ENCODE measurements at regions of chr9 and their contacts with region 1.

Region 1: DNA sequence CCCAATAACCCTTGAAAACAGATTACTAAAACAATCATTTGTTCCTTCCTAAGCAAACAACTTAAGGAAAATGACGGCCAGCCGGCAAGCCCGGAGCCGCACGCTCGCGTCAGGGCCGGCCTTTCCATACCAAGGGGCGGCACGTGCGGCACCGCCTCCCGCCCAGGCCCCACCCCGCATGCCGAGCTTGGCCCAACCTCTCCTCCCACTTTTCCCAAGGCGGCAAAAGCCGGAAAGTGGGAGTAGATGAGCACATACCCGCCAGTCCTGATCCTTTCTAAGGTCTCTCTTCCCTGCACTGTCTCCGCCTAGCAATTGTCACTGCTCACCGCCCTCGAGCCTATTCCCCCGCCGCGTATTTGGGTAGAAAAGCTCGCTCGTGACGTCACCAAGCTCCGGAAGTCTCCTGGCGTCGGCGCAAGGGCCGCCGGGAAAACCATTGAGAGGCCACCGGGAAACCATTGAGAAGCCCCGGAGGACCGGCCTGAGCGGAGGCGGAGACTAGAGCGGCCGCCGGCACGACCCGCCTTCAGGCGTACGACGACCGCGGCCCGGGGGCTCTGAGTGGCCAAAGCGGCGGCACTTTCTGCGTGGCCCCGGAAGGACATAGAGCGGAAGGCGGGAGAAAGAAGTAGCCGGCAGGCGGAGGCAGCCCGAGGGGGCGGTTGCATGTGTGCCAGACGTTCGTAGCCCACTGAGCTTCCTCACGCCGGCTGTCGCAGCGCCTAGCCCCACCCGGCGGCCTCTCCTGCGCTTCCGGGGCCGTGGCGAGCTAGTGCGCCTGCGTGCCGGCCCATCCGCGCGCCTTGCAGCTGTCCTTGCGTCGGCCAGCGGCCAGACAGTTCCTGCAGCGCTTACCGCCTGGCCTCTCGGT is at the starts of genes NCBP1 and TSTD2:
- DNase-seq: peak; percentile 89 to 98 (median 96)
- ATAC-seq: peak; percentile 87 to 90
- H3K4me3 Mint-ChIP-seq: peak within 1 kb of the TSS; percentile 90 to 100 (median 98)
- H3K27ac Mint-ChIP-seq: peak within 1 kb of the TSS; percentile 95 to 100 (median 99)
- H3K4me1 Mint-ChIP-seq: peaks cover 40 to 77% (median 61%) of the 10 kb centered on the region in 4 donors
- H3K27me3 Mint-ChIP-seq: no peaks in the 10 kb centered on the region
- polyA plus RNA-seq, gene NCBP1: 17.9 to 19.7 (median 18.1) TPM
- polyA plus RNA-seq, gene TSTD2: 7.0 to 8.9 (median 7.3) TPM

Region 2: GRCh38 chr9:97411789-97412625 is 221.2 kb before region 1 on chr9 and contains the start of gene TDRD7:
- POLR2A ChIA-PET with region 1: interaction called, 18 read pairs
- DNase-seq: peak; percentile 83 to 96 (median 90)
- ATAC-seq: peak; percentile 83 to 88
- H3K4me3 Mint-ChIP-seq: peak within 1 kb of the TSS; percentile 68 to 95 (median 88)
- H3K27ac Mint-ChIP-seq: peak within 1 kb of the TSS; percentile 76 to 95 (median 86)
- H3K4me1 Mint-ChIP-seq: peaks cover 15 to 44% (median 37%) of the 10 kb centered on the region in 4 donors
- H3K27me3 Mint-ChIP-seq: peaks cover 10 to 23% (median 14%) of the 10 kb centered on the region in 5 donors
- polyA plus RNA-seq, gene TDRD7: 2.5 to 5.0 (median 3.0) TPM

Region 3: DNA sequence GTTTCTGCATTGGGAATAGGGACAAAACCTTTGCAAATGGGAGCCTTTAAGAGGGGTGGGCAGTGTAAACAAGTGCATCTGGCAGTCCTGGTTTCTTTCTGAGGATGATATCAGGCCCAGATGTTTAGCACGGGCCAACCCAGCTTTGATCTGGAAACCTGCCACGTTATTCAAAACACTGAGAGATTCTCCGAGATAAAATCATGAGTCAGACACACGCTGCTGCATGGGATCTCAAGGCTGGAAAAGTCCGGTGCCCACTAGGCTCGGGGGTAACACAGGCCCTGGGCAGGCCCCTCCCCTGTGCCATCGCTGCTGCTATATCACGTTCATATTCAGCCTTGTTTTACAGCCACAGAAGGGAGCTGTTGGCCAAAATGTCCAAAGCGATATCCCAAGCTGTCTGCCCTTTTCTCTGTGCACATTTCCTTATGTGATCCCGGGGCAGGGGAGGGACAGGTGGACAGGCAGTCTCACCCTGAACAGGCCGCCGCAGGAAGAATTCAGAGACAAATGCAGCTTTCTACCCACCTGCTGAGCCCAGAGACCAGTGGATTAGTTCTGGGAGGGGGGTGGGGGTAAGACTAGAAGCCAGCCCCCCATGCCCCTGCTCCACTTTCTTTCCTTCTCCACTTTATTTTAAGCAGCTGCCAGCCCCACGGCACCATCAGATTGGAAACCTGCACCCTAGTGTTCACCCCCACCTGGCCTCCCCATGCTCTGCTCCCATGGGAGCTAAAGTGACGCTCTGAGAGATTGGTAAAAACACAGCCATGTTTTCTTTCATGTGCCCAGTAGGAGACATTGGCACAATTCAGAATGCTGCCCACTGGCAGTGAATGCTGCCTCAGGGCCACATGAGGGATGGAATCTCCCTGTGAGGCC is 68.7 kb before region 1 on chr9:
- POLR2A ChIA-PET with region 1: no interaction called
- DNase-seq: no peak
- ATAC-seq: no peak
- H3K4me3 Mint-ChIP-seq: no peak overlapping the region
- H3K27ac Mint-ChIP-seq: peak overlapping the region in 1 of 10 donors; percentile 37
- H3K4me1 Mint-ChIP-seq: peaks cover 0 to 2% (median 0%) of the 10 kb centered on the region in 4 donors
- H3K27me3 Mint-ChIP-seq: peaks cover 1 to 11% (median 7%) of the 10 kb centered on the region in 5 donors

Region 4: DNA sequence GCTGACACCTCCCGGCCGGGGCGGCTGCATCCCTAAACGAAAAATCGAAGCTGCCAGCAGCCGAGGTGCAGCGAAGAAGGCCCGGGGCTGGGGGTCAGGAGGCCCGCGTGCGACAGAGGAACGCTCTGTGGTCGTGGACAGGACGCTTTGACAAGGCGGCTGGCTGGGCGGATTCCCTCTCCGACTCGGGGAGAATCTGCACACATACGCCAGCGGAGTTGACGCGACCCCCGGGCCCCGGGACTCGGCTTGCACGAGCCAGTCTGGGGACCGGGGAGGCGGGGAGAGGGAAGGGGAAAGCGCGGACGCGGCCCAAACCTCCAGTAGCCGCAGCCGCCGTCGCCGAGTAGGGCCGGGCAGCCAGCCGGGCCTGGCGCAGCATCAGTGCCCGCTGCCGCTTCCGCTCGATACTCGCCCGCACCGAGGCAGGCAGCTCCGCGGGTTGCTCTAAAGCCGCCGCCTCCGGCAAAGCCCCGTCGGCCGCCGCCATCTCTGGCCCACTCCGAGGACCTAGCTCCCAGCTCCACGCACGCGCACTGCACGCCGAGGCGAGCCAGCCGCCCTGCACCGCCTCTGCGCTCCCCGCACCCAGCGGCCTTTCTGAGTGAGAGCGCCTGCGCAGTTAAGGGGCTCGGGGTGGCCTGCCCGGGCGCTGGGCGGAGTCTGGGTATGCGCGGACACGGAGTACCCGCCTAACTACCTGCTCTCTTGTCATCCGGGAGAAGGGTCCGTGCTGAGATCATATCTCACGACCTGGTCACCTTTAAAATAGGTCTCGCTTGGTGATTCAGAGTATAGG is 63.8 kb after region 1 on chr9 and contains the start of gene XPA:
- POLR2A ChIA-PET with region 1: interaction called, 30 read pairs
- DNase-seq: peak; percentile 94 to 98 (median 96)
- ATAC-seq: peak; percentile 92 to 93
- H3K4me3 Mint-ChIP-seq: peak within 1 kb of the TSS; percentile 89 to 95 (median 92)
- H3K27ac Mint-ChIP-seq: peak within 1 kb of the TSS; percentile 90 to 98 (median 95)
- H3K4me1 Mint-ChIP-seq: peaks cover 33 to 65% (median 58%) of the 10 kb centered on the region in 4 donors
- H3K27me3 Mint-ChIP-seq: peaks cover 0 to 12% (median 3%) of the 10 kb centered on the region in 5 donors
- polyA plus RNA-seq, gene XPA: 34.8 to 39.2 (median 35.1) TPM

Measured in naive thymus-derived CD8-positive, alpha-beta T cell (primary cell).